Esophagus muscularis mucosa (tissue), 4 donors: ENCODE measurements at regions of chr3 and their contacts with region 1.

Region 1: DNA sequence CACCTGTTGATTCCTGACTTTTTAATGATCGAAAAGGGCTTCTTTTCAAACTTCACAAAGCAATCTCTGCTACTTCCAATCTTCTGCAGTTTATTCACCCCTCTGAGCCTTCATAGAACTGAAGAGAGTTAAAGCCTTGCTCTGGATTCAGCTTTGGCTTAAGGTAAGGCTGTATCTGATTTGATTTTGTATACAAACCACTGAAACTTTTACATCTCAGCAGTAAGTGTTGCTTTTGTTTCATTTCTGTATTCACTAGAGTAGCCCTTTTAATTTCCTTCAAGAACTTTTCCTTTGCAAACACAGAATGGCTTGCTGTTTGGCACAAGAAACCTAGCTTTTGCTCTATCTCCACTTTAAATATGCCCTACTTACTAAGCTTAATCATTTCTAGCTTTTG is 1193.0 kb upstream of the GBE1 start:
- DNase-seq: no peak
- H3K4me3 ChIP-seq: no peak overlapping the region
- H3K27ac ChIP-seq: no peak overlapping the region
- H3K4me1 ChIP-seq: no peaks in the 10 kb centered on the region
- H3K27me3 ChIP-seq: no peaks in the 10 kb centered on the region
- CTCF ChIP-seq: no peak
- EP300 ChIP-seq: no peak
- POLR2A ChIP-seq: no peak

Region 2: GRCh38 chr3:82927309-82928253 is 26.9 kb before region 1 on chr3:
- intact Hi-C with region 1: loop called (anchors 2 kb)
- DNase-seq: no peak
- H3K4me3 ChIP-seq: no peak overlapping the region
- H3K27ac ChIP-seq: no peak overlapping the region
- H3K4me1 ChIP-seq: no peaks in the 10 kb centered on the region
- H3K27me3 ChIP-seq: no peaks in the 10 kb centered on the region
- CTCF ChIP-seq: no peak
- EP300 ChIP-seq: no peak
- POLR2A ChIP-seq: no peak